B cell (primary cell): ENCODE measurements at regions of chr3 and their contacts with region 1.

Region 1: DNA sequence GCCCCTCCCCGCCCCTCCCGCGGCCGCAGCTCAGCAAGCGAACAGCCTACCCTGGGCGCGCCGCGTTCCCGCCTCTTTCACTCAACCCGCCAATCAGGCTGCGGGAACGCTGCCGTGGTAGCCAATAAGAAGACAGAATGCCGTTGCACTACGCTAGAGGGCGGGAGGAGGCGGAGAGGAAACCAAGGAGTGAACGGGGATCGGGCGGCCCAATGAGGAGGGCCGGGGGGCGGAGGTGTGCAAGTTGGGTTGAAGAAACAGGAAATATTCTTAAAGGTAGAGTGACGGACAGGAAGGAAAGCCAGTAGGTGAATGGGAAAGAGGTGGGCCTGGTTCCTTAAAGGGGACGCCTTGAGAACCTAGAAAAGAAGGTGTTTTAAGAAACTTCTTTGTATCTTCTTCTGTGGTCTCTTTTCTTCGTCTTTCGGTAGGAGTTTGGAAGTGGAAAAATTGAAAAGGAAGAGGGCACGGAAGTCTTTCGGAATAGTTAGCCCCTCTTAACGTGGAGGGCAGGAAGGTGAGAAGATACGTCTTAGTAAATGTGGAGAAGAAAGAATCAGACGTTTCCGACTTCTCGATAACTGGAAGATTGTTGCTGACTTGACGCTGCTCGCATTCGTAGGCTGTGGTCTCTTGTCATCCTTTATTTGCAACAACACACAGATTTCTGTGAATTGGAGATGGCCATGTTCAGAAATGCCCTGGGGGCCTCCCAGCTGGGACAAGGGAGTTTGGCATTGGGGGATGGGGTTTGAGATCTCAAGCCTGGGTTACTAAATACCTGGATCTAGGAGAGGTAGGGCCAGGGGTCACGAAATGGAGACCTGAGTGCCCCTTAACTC is 437 bp upstream of the USF3 start:
- DNase-seq: peak; percentile 100
- ATAC-seq: peak; percentile 87
- H3K4me3 ChIP-seq: peak overlapping the region; percentile 73 to 100 (median 90)
- H3K4me3 Mint-ChIP-seq: no peak overlapping the region
- H3K27ac ChIP-seq: peak overlapping the region; percentile 81 to 90
- H3K27ac Mint-ChIP-seq: no peak overlapping the region
- H3K4me1 ChIP-seq: peaks cover 39 to 40% of the 10 kb centered on the region in 2 donors
- H3K4me1 Mint-ChIP-seq: peaks cover 27% of the 10 kb centered on the region
- H3K27me3 ChIP-seq: no peaks in the 10 kb centered on the region
- H3K27me3 Mint-ChIP-seq: no peaks in the 10 kb centered on the region
- CTCF ChIP-seq: no peak

Region 2: DNA sequence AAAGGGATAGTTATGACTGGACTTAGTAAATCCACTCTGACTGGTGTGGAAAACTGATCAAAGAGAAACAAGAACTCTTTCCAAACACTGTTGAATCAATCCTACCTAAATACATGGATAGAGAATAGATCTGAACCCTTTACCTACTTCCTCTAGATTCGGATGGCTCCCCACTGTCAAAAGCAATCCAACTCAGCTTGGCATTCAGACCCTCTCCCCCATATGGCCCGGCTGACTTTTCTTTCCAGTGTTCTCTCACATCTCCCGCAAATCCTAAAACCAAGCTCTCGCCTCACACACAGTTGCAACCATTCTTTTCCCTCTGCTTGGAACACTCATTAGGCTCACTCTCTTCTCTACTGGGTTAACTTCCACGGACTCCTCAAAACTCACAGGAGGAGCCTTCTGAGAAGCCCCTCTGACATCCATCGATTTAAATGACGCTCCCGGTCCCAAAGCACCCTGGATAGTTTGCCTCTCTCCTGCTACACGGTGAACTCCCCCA is 182.6 kb before region 1 on chr3:
- CTCF ChIA-PET with region 1: no interaction called
- POLR2A ChIA-PET with region 1: interaction called, 4 read pairs
- intact Hi-C with region 1: loop called (anchors 1 kb)
- DNase-seq: no peak
- ATAC-seq: no peak
- H3K4me3 ChIP-seq: peak overlapping the region; percentile 46 to 98 (median 92)
- H3K4me3 Mint-ChIP-seq: no peak overlapping the region
- H3K27ac ChIP-seq: peak overlapping the region; percentile 77 to 91
- H3K27ac Mint-ChIP-seq: no peak overlapping the region
- H3K4me1 ChIP-seq: peaks cover 12 to 17% of the 10 kb centered on the region in 2 donors
- H3K4me1 Mint-ChIP-seq: peaks cover 14% of the 10 kb centered on the region
- H3K27me3 ChIP-seq: peaks cover 0 to 14% (median 4%) of the 10 kb centered on the region in 4 experiments
- H3K27me3 Mint-ChIP-seq: peaks cover 23% of the 10 kb centered on the region
- CTCF ChIP-seq: no peak

Region 3: GRCh38 chr3:113606539-113607218 is 90.2 kb before region 1 on chr3:
- CTCF ChIA-PET with region 1: interaction called, 3 read pairs
- POLR2A ChIA-PET with region 1: interaction called, 5 read pairs
- intact Hi-C with region 1: loop called (anchors 2 kb)
- DNase-seq: peak; percentile 78
- ATAC-seq: peak; percentile 96
- H3K4me3 ChIP-seq: no peak overlapping the region
- H3K4me3 Mint-ChIP-seq: peak overlapping the region; percentile 69
- H3K27ac ChIP-seq: peak overlapping the region; percentile 42 to 63
- H3K27ac Mint-ChIP-seq: peak overlapping the region; percentile 85
- H3K4me1 ChIP-seq: peaks cover 19 to 23% of the 10 kb centered on the region in 2 donors
- H3K4me1 Mint-ChIP-seq: peaks cover 27% of the 10 kb centered on the region
- H3K27me3 ChIP-seq: no peaks in the 10 kb centered on the region
- H3K27me3 Mint-ChIP-seq: no peaks in the 10 kb centered on the region
- CTCF ChIP-seq: no peak

Region 4: DNA sequence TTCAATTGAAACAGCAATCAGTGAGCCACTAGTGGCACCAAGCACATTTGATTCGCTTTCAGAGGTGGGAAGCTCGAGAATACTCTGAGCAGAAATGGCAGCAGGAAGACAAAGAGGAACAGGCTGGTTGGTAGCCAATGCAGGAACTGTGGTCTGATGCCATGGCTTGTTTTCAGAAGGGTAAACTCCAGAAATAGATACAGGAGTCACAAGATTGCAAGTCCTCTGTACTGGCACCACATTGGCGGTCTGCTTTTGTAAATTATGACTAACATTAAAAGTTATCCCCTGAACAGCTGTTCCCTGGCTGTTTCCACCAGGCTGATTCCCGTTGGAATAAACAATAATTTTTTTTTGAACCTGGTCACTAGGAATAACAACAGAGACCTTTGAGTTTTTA is 36.0 kb before region 1 on chr3:
- CTCF ChIA-PET with region 1: interaction called, 7 read pairs
- POLR2A ChIA-PET with region 1: interaction called, 8 read pairs
- intact Hi-C with region 1: loop called (anchors 1 kb)
- DNase-seq: peak; percentile 68
- ATAC-seq: peak; percentile 25
- H3K4me3 ChIP-seq: peak overlapping the region in 1 of 5 experiments; percentile 49
- H3K4me3 Mint-ChIP-seq: peak overlapping the region; percentile 70
- H3K27ac ChIP-seq: peak overlapping the region; percentile 81 to 93
- H3K27ac Mint-ChIP-seq: peak overlapping the region; percentile 94
- H3K4me1 ChIP-seq: peaks cover 76 to 81% of the 10 kb centered on the region in 2 donors
- H3K4me1 Mint-ChIP-seq: peaks cover 82% of the 10 kb centered on the region
- H3K27me3 ChIP-seq: no peaks in the 10 kb centered on the region
- H3K27me3 Mint-ChIP-seq: no peaks in the 10 kb centered on the region
- CTCF ChIP-seq: no peak

Region 5: GRCh38 chr3:113947372-113948014 is 250.6 kb after region 1 on chr3 and contains the start of gene ZDHHC23:
- CTCF ChIA-PET with region 1: no interaction called
- POLR2A ChIA-PET with region 1: no interaction called
- intact Hi-C with region 1: loop called (anchors 2 kb)
- DNase-seq: peak; percentile 88
- ATAC-seq: peak; percentile 84
- H3K4me3 ChIP-seq: peak within 1 kb of the TSS; percentile 47 to 89 (median 84)
- H3K4me3 Mint-ChIP-seq: peak within 1 kb of the TSS; percentile 87
- H3K27ac ChIP-seq: peak within 1 kb of the TSS; percentile 48 to 74
- H3K27ac Mint-ChIP-seq: peak within 1 kb of the TSS; percentile 89
- H3K4me1 ChIP-seq: peaks cover 12 to 14% of the 10 kb centered on the region in 2 donors
- H3K4me1 Mint-ChIP-seq: peaks cover 18% of the 10 kb centered on the region
- H3K27me3 ChIP-seq: no peaks in the 10 kb centered on the region
- H3K27me3 Mint-ChIP-seq: no peaks in the 10 kb centered on the region
- CTCF ChIP-seq: no peak
- total RNA-seq, gene ZDHHC23: 72.6 and 75.1 TPM in 2 replicates